ENCODE measurements at regions of chr12 and their contacts with region 1.

Region 1: DNA sequence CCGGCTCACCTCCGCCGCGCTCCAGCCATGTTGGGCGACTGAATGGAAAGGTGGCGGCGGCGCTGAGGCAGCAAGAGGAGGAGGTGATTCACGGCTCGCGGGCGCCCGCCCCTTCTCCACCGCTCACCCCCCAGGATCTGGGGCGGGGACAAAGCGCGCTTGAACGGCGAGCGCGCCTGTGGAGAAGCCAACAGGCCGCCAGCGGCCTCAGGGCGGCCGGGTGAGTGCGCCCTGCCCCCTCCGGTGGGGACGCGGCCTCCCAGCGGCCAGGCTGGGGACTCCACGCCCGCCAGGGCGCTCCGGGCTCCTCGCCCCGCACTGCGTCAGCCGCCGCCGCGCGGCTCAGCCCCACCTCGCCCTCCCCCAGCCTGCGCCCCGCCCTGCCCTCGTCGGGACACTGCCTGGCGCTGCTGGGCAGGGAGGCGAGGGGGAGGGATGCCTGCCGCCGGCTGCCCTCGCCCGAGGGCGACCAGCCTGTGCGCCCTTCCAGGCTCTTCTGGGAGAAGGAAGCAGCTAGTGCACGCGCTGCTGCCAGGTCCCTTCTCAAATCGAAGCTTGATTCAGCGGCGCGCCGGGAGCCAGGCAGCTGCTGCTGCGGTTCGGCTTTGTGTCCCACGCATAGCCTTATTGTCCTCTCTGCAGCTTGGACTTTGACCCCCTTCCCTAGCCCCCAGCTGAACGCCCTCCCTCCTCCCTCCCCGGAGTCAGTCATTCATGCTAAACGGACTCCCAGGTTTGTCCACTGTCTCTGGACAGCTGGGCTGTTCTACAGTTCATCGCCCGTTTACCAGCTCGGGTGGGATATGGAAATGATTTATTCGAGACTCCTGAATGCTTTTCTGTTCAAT is at the start of gene KIF21A:
- DNase-seq: peak; percentile 73 to 85
- H3K4me3 ChIP-seq: peak within 1 kb of the TSS; percentile 64 to 84 (median 70)
- H3K27ac ChIP-seq: peak within 1 kb of the TSS; percentile 71; the same call in 1 of the 2 replicates
- H3K4me1 ChIP-seq: peaks cover 0 to 12% (median 7%) of the 10 kb centered on the region in 4 experiments; a peak in 4 of 7 replicates
- H3K27me3 ChIP-seq: no peaks in the 10 kb centered on the region; a peak in 1 of 7 replicates
- CTCF ChIP-seq: peak; percentile 41 to 61 (median 57)
- EP300 ChIP-seq: no peak
- POLR2A ChIP-seq: peak; percentile 82 to 86
- RAD21 ChIP-seq: no peak; a peak in 2 of 4 replicates
- total RNA-seq, gene KIF21A: 26.0 and 36.6 TPM in 2 replicates

Region 2: GRCh38 chr12:39237004-39237403 is 206.3 kb before region 1 on chr12:
- CTCF ChIA-PET with region 1: no interaction called
- POLR2A ChIA-PET with region 1: no interaction called
- DNase-seq: no peak
- H3K4me3 ChIP-seq: no peak overlapping the region
- H3K27ac ChIP-seq: no peak overlapping the region
- H3K4me1 ChIP-seq: no peaks in the 10 kb centered on the region
- H3K27me3 ChIP-seq: no peaks in the 10 kb centered on the region
- CTCF ChIP-seq: no peak
- EP300 ChIP-seq: no peak
- POLR2A ChIP-seq: no peak
- RAD21 ChIP-seq: no peak

Region 3: GRCh38 chr12:39392154-39392925 is 51.0 kb before region 1 on chr12:
- CTCF ChIA-PET with region 1: no interaction called
- POLR2A ChIA-PET with region 1: interaction called, 16 read pairs
- DNase-seq: no peak
- H3K4me3 ChIP-seq: no peak overlapping the region
- H3K27ac ChIP-seq: no peak overlapping the region
- H3K4me1 ChIP-seq: peaks cover 2 to 18% (median 15%) of the 10 kb centered on the region in 4 experiments; a peak in 5 of 7 replicates
- H3K27me3 ChIP-seq: no peaks in the 10 kb centered on the region
- CTCF ChIP-seq: no peak
- EP300 ChIP-seq: no peak
- POLR2A ChIP-seq: no peak
- RAD21 ChIP-seq: no peak